Panc1 (cell line): ENCODE measurements at regions of chr11 and their contacts with region 1.

Region 1: GRCh38 chr11:78188286-78189173 is at the starts of genes KCTD21 and USP35:
- DNase-seq: peak; percentile 85
- ATAC-seq: peak; percentile 98
- H3K4me3 ChIP-seq: peak within 1 kb of the TSS; percentile 75 to 89
- H3K27ac ChIP-seq: peak within 1 kb of the TSS; percentile 80
- H3K4me1 ChIP-seq: peaks cover 27% of the 10 kb centered on the region
- H3K27me3 ChIP-seq: no peaks in the 10 kb centered on the region
- CTCF ChIP-seq: no peak
- total RNA-seq, gene KCTD21: 9.7 TPM
- total RNA-seq, gene USP35: 11.8 TPM

Region 2: DNA sequence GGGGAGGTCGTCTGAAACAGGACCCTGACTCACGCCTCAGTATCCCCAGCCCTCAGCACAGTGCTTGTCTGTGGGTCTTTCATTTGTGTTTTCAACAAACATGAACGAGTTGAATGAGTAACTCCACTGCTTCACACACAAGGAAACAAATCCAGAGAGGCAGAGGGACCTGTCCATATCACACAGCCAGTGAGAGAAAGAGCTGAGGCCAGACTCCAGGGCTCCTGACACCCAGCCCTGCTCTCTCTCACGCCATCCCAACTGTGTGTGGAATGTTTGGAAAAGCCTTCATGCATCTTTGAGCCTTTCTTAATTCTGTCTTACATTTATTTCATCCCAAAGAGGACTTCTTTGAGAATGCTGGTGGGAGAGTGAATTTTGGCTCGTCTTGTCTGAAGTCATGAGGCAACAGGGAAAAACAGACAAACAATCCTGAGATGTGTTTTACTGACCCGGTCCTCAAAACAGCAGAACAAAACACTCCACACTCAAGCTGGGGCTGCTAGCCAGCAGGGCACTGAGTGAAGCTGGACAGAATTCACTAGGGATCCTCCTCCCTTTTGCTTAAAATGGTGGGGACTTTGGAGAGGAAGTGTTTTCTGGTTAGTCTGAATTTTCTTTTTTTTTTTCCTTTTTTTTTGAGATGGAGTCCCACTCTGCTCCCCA is 29.4 kb before region 1 on chr11:
- CTCF ChIA-PET with region 1: no interaction called
- POLR2A ChIA-PET with region 1: interaction called, 13 read pairs
- in situ Hi-C with region 1: no loop called
- intact Hi-C with region 1: no loop called
- DNase-seq: no peak
- ATAC-seq: no peak
- H3K4me3 ChIP-seq: no peak overlapping the region
- H3K27ac ChIP-seq: no peak overlapping the region
- H3K4me1 ChIP-seq: peaks cover 11% of the 10 kb centered on the region
- H3K27me3 ChIP-seq: no peaks in the 10 kb centered on the region
- CTCF ChIP-seq: no peak